ENCODE measurements at regions of chr2 and their contacts with region 1.

Region 1: GRCh38 chr2:74002487-74003391 is 18.0 kb downstream of the TET3 start:
- H3K4me3 Mint-ChIP-seq: peak overlapping the region; percentile 67
- H3K27ac Mint-ChIP-seq: no peak overlapping the region
- H3K4me1 Mint-ChIP-seq: peaks cover 96% of the 10 kb centered on the region
- H3K27me3 Mint-ChIP-seq: no peaks in the 10 kb centered on the region

Region 2: GRCh38 chr2:73426176-73426575 is 576.6 kb before region 1 on chr2:
- intact Hi-C with region 1: no loop called
- H3K4me3 Mint-ChIP-seq: no peak overlapping the region
- H3K27ac Mint-ChIP-seq: no peak overlapping the region
- H3K4me1 Mint-ChIP-seq: no peaks in the 10 kb centered on the region
- H3K27me3 Mint-ChIP-seq: no peaks in the 10 kb centered on the region

Region 3: DNA sequence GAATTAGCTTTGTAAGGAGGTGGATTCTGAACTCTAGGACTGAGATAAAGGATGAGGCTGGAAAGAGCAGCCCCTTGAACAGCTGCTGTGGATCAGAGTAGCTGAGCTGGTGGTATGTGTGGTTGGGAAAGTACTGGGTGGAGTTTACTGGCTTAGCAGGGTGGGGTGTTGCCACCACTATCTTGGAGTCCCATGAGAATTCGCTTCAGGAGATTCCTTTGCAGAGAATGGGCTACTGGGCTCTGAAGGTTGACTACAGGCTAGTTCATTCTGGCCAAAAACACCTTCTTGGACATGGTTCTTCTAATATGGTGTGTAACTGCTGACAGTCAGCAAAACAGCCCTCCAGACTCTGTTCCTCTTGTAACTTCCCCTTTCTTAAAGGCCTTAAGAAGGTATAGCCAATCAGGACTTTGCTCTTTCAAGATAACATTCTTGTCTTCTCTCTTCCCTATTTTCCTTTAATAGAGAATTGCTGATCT is 34.7 kb after region 1 on chr2:
- intact Hi-C with region 1: loop called (anchors 5 kb)
- H3K4me3 Mint-ChIP-seq: peak overlapping the region; percentile 66
- H3K27ac Mint-ChIP-seq: peak overlapping the region; percentile 86
- H3K4me1 Mint-ChIP-seq: peaks cover 94% of the 10 kb centered on the region
- H3K27me3 Mint-ChIP-seq: no peaks in the 10 kb centered on the region

Region 4: DNA sequence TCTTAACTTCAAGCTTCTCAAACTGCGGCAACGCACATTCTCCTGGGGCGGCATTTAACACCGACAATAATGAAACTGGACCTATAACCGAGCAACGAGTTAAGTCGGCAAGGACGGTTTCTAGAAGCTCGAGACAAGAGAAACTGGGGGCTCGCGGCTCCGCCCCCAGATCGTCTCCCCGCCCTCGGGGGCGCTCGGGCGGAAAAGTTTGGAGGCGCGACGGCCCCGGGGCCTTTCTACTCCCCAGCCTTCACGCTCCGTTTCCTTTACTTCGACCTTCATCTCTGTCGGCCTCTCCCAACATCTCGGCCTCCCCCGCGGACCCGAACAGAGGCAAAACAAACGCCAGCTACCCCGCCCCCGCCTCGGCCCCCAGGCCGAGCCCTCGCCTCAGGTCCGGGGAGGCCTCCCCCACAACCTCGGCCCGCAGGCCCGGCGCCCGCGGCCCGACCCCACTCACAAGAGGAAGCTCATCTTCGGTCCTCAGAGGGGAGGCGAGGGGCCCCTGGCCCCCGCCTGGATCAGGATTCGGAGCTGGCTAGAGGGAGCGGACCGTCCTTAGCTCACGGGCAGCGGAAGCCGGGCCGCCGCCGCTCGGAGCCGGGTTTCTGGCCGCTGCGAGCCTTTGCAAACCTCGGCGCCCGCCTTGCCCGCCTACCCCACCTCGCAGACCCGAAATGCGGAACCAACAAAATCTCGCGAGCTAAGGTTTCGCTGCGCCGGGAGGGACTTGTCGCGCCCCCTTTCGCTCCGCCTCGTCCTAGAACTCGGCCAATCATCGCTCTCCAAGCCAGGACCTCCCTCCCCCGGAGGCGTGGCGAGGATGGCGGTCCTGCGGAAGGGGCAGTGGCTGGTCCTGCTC is 175.7 kb after region 1 on chr2 and contains the start of gene MOB1A:
- intact Hi-C with region 1: no loop called
- H3K4me3 Mint-ChIP-seq: peak within 1 kb of the TSS; percentile 85
- H3K27ac Mint-ChIP-seq: peak within 1 kb of the TSS; percentile 99
- H3K4me1 Mint-ChIP-seq: peaks cover 56% of the 10 kb centered on the region
- H3K27me3 Mint-ChIP-seq: no peaks in the 10 kb centered on the region

Measured in dendritic cell treated with granulocyte-macrophage colony-stimulating factor and Interleukin-4, amounts not matched to agents 40 ng/mL and 50 ng/mL, for 4 days (primary cell).